Mammary epithelial cell (primary cell): ENCODE measurements at regions of chr2 and their contacts with region 1.

Region 1: DNA sequence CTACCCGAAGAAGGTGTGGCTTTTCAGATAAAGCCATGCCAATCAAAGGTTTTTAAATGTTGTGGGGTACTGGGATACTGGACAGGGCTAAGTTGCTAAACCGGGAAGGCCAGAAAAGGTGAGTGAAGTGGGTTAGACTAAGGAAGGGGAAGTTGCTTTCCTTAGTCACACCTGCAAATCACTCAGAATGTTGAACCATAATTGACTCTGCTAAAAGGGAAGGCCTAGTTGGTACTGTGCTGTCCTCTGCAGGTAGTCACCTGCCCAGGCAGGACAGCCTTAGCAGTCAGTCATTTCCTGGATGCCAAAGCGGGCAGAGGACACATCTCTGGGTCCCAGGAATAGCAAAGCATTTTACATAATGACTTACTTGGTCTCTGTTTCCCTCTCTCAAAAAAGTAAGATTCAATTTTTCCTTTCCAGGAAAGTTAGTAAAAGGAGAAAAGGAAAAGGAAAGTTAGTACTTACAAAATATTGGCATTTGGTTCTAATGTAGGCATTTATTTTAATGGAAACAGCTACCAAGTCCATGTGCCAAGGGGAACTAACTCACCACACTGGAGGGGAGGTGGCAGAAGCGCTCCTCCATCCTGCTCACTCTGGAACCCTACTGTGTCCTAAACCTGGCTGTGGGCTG is 60.3 kb downstream of the RFTN2 start:
- DNase-seq: peak; percentile 80
- H3K4me3 ChIP-seq: no peak overlapping the region
- H3K27ac ChIP-seq: no peak overlapping the region
- H3K4me1 ChIP-seq: peaks cover 15% of the 10 kb centered on the region
- H3K27me3 ChIP-seq: no peaks in the 10 kb centered on the region
- CTCF ChIP-seq: peak; percentile 69 to 95

Region 2: GRCh38 chr2:197209742-197210408 is 405.3 kb before region 1 on chr2:
- CTCF ChIA-PET with region 1: no interaction called
- dilution Hi-C with region 1: no loop called
- in situ Hi-C with region 1: no loop called
- intact Hi-C with region 1: loop called (anchors 10 kb)
- DNase-seq: peak; percentile 35
- H3K4me3 ChIP-seq: no peak overlapping the region
- H3K27ac ChIP-seq: no peak overlapping the region
- H3K4me1 ChIP-seq: no peaks in the 10 kb centered on the region
- H3K27me3 ChIP-seq: no peaks in the 10 kb centered on the region
- CTCF ChIP-seq: no peak

Region 3: DNA sequence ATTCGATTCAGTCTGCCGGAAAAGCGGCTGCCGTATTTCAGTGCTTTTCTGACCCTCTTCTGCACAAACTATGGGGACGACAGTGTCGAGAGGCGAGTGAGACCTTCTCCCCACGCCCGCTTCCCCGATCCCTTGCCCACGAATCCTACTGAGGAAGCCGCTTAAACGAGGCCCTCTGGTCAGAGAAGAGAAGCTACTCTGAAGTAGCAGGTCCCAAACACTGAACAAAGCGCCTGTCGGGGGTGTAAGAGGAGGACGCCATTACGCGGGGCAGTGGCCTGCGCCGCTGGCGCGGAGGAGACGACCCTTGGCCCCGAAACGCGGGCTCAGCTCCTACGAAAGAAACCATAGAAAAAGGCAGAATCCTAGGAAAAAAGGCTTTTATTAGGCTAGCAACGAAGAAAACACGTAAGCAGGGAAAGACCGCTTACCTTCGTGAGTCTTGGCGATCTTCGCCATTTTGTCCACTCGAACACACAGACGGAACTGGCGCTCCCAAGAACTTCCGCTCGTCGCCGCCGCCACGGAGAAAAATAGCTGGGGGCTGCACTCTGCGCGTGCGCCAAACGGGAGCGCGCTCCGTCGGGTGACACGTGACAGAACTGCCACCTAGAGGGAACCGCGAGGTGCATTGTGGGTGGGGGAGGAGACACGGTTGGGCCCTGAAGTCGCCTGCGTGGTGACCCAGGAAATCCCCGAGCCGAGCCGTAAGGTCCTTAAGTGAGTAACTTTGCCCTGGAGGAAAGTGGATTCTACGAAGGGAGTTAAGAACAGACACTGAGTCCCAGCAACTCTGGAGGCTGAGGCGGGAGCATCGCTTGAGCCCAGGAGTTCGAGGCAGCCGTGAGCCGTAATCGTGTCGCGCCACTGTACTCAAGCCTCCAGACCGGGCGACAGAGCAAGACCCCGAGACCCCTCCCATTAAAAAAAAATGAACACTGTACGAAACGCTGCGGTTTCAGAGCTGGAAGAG is 180.3 kb before region 1 on chr2 and contains the start of gene SF3B1:
- CTCF ChIA-PET with region 1: no interaction called
- dilution Hi-C with region 1: no loop called
- in situ Hi-C with region 1: no loop called
- intact Hi-C with region 1: loop called (anchors 5 kb)
- DNase-seq: peak; percentile 98
- H3K4me3 ChIP-seq: peak within 1 kb of the TSS; percentile 76 to 91 (median 88)
- H3K27ac ChIP-seq: peak within 1 kb of the TSS; percentile 94
- H3K4me1 ChIP-seq: peaks cover 12% of the 10 kb centered on the region
- H3K27me3 ChIP-seq: no peaks in the 10 kb centered on the region
- CTCF ChIP-seq: no peak
- total RNA-seq, gene SF3B1: 132 to 153 TPM

Region 4: GRCh38 chr2:197453161-197453914 is 161.8 kb before region 1 on chr2 and contains the start of gene COQ10B:
- CTCF ChIA-PET with region 1: no interaction called
- dilution Hi-C with region 1: no loop called
- in situ Hi-C with region 1: no loop called
- intact Hi-C with region 1: loop called (anchors 1 kb)
- DNase-seq: peak; percentile 99
- H3K4me3 ChIP-seq: peak within 1 kb of the TSS; percentile 80 to 100 (median 84)
- H3K27ac ChIP-seq: peak within 1 kb of the TSS; percentile 98
- H3K4me1 ChIP-seq: peaks cover 13% of the 10 kb centered on the region
- H3K27me3 ChIP-seq: no peaks in the 10 kb centered on the region
- CTCF ChIP-seq: peak in 1 of 2 donors; percentile 37
- total RNA-seq, gene COQ10B: 23.9 to 40.0 TPM

Region 5: GRCh38 chr2:197647961-197648690 is 33.0 kb after region 1 on chr2:
- CTCF ChIA-PET with region 1: no interaction called
- dilution Hi-C with region 1: no loop called
- in situ Hi-C with region 1: no loop called
- intact Hi-C with region 1: no loop called
- DNase-seq: no peak
- H3K4me3 ChIP-seq: no peak overlapping the region
- H3K27ac ChIP-seq: no peak overlapping the region
- H3K4me1 ChIP-seq: no peaks in the 10 kb centered on the region
- H3K27me3 ChIP-seq: no peaks in the 10 kb centered on the region
- CTCF ChIP-seq: no peak

Region 6: DNA sequence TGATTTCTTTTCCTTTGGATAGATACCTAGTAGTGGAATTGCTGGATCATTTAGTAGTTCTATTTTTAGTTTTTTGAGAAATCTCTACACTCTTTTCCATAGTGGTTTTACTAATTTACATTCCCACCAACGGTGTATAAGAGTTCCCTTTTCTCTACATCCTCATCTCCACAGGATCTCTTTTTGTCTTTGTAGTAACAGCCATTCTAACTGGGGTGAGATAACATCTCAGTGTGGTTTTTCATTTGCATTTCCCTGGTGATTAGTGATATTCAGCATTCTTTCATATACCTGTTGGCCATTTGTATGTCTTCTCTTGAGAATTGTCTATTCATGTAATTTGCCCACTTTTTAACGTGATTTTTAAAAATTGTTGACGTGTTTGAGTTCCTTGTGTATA is 46.5 kb after region 1 on chr2:
- CTCF ChIA-PET with region 1: no interaction called
- dilution Hi-C with region 1: loop called (anchors 5 kb)
- in situ Hi-C with region 1: no loop called
- intact Hi-C with region 1: no loop called
- DNase-seq: no peak
- H3K4me3 ChIP-seq: no peak overlapping the region
- H3K27ac ChIP-seq: no peak overlapping the region
- H3K4me1 ChIP-seq: no peaks in the 10 kb centered on the region
- H3K27me3 ChIP-seq: no peaks in the 10 kb centered on the region
- CTCF ChIP-seq: no peak